WTC11 (cell line): ENCODE measurements at regions of chr17 and their contacts with region 1.

Region 1: DNA sequence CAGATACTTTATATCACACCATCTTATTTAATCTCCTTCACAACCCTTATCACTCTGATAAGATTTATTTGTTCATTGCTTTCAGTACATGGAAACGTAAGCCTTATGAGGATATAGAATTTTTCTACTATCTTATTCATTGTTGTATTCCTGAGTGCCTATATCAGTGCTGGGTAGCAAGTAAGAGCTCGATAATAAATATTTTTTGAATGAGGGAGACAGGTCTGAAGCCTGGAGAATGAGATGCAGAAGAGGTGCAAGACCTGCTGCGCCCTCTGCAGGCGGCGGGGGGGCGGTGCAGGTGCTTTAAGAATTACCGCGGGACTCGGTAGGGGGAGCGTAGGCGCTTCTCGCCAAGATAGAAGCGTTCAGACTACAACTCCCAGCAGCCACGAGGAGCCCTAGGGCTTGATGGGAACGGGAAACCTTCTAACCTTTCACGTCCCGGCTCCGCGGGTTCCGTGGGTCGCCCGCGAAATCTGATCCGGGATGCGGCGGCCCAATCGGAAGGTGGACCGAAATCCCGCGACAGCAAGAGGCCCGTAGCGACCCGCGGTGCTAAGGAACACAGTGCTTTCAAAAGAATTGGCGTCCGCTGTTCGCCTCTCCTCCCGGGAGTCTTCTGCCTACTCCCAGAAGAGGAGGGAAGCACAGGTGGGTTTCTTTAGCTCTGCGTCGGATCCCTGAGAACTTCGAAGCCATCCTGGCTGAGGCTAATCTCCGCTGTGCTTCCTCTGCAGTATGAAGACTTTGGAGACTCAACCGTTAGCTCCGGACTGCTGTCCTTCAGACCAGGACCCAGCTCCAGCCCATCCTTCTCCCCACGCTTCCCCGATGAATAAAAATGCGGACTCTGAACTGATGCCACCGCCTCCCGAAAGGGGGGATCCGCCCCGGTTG is at the start of gene WRAP53:
- DNase-seq: peak; percentile 98
- ATAC-seq: peak; percentile 89
- H3K4me3 Mint-ChIP-seq: peak within 1 kb of the TSS; percentile 88
- H3K27ac Mint-ChIP-seq: peak within 1 kb of the TSS; percentile 100
- H3K4me1 Mint-ChIP-seq: peaks cover 27% of the 10 kb centered on the region
- H3K27me3 Mint-ChIP-seq: no peaks in the 10 kb centered on the region
- CTCF ChIP-seq: peak; percentile 94
- total RNA-seq, gene WRAP53: 35.5 to 37.3 TPM (median 37.2 TPM) in 3 replicates

Region 2: GRCh38 chr17:7589204-7589868 is 98.8 kb before region 1 on chr17:
- CTCF ChIA-PET with region 1: interaction called, 43 read pairs
- POLR2A ChIA-PET with region 1: interaction called, 41 read pairs
- DNase-seq: peak; percentile 91
- ATAC-seq: peak; percentile 71
- H3K4me3 Mint-ChIP-seq: peak overlapping the region; percentile 70
- H3K27ac Mint-ChIP-seq: peak overlapping the region; percentile 79
- H3K4me1 Mint-ChIP-seq: peaks cover 38% of the 10 kb centered on the region
- H3K27me3 Mint-ChIP-seq: no peaks in the 10 kb centered on the region
- CTCF ChIP-seq: peak; percentile 87

Region 3: DNA sequence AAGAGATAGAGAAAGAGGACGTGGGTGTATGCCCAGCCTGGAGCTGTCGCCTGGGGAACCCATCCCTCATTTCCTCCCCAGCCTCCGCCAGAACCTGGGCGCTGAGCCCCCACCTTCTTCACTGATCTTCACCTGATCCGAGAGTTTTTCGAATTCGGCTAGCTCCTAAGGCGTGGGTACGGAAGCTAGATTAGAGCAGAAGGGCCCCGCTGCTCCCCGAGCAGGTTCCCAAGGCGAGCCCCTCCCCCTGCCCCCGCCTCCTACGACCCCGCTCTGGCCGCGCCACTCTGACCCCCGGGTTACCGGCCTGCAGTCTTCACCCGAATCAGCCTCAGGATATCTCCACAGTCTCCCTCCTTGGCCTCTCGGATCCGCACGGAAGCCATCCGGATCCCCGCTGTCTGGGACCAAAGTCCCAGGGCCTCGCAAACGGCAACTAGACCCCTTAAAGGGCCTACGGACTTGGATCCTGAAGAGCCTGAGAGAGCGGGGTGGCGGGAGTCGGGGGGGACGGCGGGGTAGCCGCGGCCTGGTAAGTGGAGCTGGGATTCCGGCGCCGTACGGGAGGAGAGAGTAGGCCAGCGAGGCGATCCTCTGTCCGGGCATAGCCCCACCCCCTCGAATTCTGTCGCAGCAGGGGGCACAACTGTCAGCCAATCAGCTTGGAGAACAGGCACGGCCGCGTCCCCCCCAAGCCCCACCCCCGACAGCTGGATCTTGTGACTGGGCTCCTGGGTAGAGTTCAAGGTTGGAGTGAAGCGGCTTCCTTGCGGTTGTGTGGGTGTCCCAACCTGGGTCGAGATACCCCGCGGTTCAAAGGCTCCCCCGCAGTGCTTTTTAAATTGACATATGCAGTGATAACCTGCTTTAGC is 60.7 kb before region 1 on chr17 and contains the start of gene SAT2:
- CTCF ChIA-PET with region 1: interaction called, 205 read pairs
- POLR2A ChIA-PET with region 1: interaction called, 68 read pairs
- DNase-seq: peak; percentile 99
- ATAC-seq: peak; percentile 87
- H3K4me3 Mint-ChIP-seq: peak within 1 kb of the TSS; percentile 85
- H3K27ac Mint-ChIP-seq: peak within 1 kb of the TSS; percentile 85
- H3K4me1 Mint-ChIP-seq: peaks cover 9% of the 10 kb centered on the region
- H3K27me3 Mint-ChIP-seq: no peaks in the 10 kb centered on the region
- CTCF ChIP-seq: no peak
- total RNA-seq, gene SAT2: 68.3 to 75.8 TPM (median 73.1 TPM) in 3 replicates

Region 4: DNA sequence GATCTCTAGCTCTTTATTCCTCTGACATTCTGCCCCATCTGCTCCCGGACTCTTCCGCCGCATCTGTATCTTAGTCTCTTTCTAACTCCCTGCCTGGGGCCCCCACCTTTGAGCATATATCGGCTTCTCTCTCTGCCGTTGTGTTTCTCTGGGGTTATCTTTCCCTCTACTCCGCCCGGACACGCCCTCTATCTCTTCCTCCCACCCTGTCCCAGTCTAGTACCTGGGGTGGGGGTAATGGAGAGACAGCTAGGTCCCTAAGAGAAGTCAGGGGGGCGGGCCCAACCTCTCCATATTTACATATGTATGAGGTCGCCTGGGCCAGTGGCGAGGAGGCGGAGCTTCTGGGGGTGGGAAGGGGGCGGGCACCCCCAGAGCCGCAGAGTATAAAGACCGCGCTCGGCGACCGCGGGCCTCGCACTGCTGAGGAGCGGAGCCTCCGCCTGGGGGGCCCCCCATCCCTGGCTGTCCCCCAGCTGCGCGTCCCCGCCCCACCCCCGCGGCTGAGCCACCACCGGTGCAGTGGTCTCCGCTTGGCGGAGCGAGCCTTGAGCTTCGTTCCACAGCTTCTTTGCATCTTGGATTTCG is 37.6 kb before region 1 on chr17 and contains the start of gene ATP1B2:
- CTCF ChIA-PET with region 1: interaction called, 69 read pairs
- POLR2A ChIA-PET with region 1: interaction called, 80 read pairs
- DNase-seq: peak; percentile 96
- ATAC-seq: peak; percentile 97
- H3K4me3 Mint-ChIP-seq: peak within 1 kb of the TSS; percentile 83
- H3K27ac Mint-ChIP-seq: peak within 1 kb of the TSS; percentile 73
- H3K4me1 Mint-ChIP-seq: peaks cover 33% of the 10 kb centered on the region
- H3K27me3 Mint-ChIP-seq: peaks cover 53% of the 10 kb centered on the region
- CTCF ChIP-seq: no peak
- total RNA-seq, gene ATP1B2: 29.1 to 37.5 TPM (median 35.9 TPM) in 3 replicates

Region 5: DNA sequence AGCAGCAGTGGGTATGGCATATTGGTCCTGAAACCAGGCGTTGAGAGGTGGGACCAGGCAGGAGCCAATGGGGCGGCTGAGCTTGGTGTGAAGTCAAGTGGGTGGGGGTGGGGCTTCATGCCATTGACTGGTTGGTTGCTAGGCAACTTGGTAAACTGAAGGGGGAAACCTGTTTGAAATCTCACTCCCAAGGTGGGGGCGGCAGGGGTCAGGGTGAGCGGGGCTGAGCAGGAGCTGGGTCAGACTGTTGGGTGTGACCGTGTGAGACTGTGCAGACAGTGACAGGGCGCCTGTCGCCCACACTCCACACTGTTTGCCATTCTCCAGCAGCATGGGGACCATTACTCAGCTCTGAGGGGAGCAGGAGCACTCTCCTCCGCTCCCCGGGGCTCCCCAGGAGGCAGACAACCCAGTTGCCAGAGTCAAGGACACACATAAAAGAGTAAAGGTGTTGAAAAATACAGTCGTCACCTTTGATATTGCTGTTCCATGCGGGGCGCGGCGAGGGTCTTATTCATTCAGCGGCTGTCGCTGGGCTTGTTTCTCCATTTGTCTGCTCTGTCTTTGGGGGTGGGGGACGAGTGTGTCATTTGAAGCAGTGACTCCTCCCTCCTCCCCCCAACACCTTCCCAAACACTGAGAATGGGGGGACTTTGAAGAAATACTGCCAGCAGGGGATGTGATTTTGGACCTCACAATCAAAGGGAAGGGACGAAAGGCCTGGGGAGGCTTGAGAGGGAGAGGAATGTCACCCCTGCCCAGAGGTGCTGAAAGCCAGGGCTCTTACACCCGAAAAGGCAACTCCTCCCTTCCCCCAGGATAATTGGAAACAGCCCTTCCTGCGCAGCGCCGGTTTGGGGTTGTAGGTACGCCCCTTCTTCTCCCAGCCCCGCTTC is 15.7 kb after region 1 on chr17:
- CTCF ChIA-PET with region 1: interaction called, 53 read pairs
- POLR2A ChIA-PET with region 1: interaction called, 55 read pairs
- DNase-seq: peak; percentile 81
- ATAC-seq: peak; percentile 68
- H3K4me3 Mint-ChIP-seq: peak overlapping the region; percentile 86
- H3K27ac Mint-ChIP-seq: peak overlapping the region; percentile 88
- H3K4me1 Mint-ChIP-seq: peaks cover 30% of the 10 kb centered on the region
- H3K27me3 Mint-ChIP-seq: peaks cover 13% of the 10 kb centered on the region
- CTCF ChIP-seq: no peak